ENCODE measurements at regions of chrX and their contacts with region 1.

Region 1: DNA sequence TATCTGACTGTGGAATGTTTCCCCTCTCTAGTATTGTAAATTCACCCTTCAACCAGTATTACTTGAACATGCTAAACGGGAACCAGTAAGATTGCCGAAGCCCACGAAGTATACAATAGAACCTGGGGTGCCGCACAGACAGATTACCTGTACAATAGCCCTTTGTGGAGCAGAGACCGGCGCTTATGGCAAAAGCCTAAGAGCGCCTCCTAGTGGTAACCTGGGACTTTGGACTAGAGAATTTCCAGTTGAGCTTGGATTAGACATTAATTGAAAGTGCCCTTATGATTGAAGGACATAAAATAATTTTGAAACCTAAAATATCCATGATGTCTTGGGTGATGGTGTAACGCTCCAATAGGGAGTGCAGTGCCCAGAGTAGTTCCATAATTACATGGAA is 14.1 kb downstream of the ZNF157 start:
- DNase-seq: peak in 2 of 3 donors; percentile 35 to 60
- ATAC-seq: peak; percentile 78 to 89 (median 85)
- H3K4me3 ChIP-seq: no peak overlapping the region
- H3K27ac ChIP-seq: no peak overlapping the region
- H3K4me1 ChIP-seq: no peaks in the 10 kb centered on the region
- H3K27me3 ChIP-seq: no peaks in the 10 kb centered on the region
- CTCF ChIP-seq: peak; percentile 68 to 87 (median 85)
- POLR2A ChIP-seq: no peak

Region 2: GRCh38 chrX:47187106-47187677 is 197.3 kb before region 1 on chrX:
- intact Hi-C with region 1: loop called (anchors 5 to 10 kb)
- DNase-seq: peak in 1 of 3 donors; percentile 50
- ATAC-seq: peak in 1 of 4 donors; percentile 5
- H3K4me3 ChIP-seq: no peak overlapping the region
- H3K27ac ChIP-seq: no peak overlapping the region
- H3K4me1 ChIP-seq: no peaks in the 10 kb centered on the region
- H3K27me3 ChIP-seq: peaks cover 0 to 6% of the 10 kb centered on the region in 2 donors
- CTCF ChIP-seq: no peak
- POLR2A ChIP-seq: no peak

Region 3: GRCh38 chrX:47193475-47194193 is 190.9 kb before region 1 on chrX and contains the start of gene UBA1:
- intact Hi-C with region 1: loop called (anchors 5 to 10 kb)
- DNase-seq: peak; percentile 93 to 97 (median 96)
- ATAC-seq: peak; percentile 84 to 93 (median 90)
- H3K4me3 ChIP-seq: peak within 1 kb of the TSS; percentile 80 to 87 (median 80)
- H3K27ac ChIP-seq: peak within 1 kb of the TSS; percentile 86 to 94 (median 94)
- H3K4me1 ChIP-seq: peaks cover 0 to 33% (median 0%) of the 10 kb centered on the region in 4 donors
- H3K27me3 ChIP-seq: peaks cover 0 to 6% of the 10 kb centered on the region in 2 donors
- CTCF ChIP-seq: peak; percentile 87 to 95 (median 91)
- POLR2A ChIP-seq: peak; percentile 79
- total RNA-seq, gene UBA1: 85.1 to 120 (median 107) TPM

Measured in right lobe of liver (tissue), 6 donors.